Lower leg skin (tissue), 4 donors: ENCODE measurements at regions of chr6 and their contacts with region 1.

Region 1: DNA sequence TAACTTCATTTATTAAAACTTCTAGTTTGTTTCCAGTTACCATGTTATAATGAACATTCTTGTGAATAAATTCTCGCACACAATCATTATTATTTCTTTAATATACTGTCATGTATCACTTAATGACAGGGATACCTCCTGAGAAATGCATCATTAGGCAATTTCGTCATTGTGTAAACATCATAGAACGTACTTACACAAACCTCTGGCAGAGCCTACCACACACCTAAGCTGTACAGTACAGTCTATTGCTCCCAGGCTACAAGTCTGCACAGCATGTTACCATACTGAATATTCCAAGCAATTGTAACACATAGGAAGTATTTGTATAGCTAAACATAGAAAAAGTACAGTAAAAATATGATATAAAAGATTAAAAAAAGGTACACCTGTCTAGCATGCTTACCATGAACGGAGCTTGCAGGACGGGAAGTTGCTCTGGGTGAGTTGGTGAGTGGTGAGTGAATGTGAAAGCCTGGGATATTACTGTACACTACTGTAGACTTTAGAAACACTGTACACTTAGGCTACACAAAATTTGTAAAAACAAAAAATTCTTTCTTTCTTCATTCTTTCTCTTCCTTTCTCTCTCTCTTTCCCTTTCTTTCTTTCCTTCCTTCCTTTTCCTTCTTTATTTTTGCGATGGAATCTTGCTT is 268.2 kb upstream of the SOX4 start:
- DNase-seq: no peak
- H3K4me3 ChIP-seq: no peak overlapping the region
- CTCF ChIP-seq: no peak
- POLR2A ChIP-seq: no peak

Region 2: DNA sequence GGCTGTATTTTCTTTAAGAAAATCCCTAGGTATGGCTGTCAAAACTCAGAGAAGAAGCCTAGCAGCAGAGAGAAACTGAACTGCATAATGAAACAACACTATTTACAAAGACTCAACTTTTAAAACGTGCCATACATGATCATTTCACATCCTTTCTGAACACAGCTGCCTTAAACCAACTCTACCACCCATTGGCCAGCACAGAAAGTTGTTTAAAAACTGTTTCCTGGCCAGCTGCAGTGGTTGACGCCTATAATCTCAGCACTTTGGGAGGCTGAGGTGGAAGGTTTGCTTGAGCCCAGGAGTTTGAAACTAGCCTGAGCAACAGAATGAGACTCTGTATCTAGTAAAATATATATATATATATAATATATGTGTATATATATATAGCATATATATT is 68.2 kb before region 1 on chr6:
- intact Hi-C with region 1: loop called (anchors 10 kb)
- DNase-seq: no peak
- H3K4me3 ChIP-seq: no peak overlapping the region
- CTCF ChIP-seq: no peak
- POLR2A ChIP-seq: no peak